ENCODE measurements at regions of chr9 and their contacts with region 1.

Region 1: GRCh38 chr9:72038890-72039410 is 21.5 kb downstream of the C9orf57 start:
- DNase-seq: peak; percentile 77

Region 2: DNA sequence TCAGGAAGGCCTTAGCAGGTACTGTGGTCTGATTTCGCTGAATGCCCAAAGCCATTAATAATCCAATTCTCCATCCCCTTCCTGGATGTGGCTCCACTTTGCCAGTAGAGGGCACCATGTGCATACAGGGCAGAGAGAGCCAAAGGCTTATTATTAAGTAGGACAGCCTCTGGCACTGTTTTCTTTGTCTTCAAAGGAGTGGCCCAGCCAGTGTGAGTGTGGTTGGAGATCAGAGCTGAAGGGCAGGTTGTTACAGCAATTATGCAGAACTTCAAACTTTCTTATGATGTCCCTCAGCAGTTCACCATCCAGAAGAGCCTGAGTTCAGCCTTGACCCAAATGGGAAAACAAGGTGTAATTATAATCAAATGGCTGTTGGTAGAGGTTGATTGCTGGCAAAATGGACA is 232.0 kb before region 1 on chr9:
- in situ Hi-C with region 1: loop called (anchors 25 kb)
- DNase-seq: peak; percentile 65

Region 3: GRCh38 chr9:72082536-72082935 is 43.6 kb after region 1 on chr9:
- in situ Hi-C with region 1: no loop called
- DNase-seq: no peak

Region 4: DNA sequence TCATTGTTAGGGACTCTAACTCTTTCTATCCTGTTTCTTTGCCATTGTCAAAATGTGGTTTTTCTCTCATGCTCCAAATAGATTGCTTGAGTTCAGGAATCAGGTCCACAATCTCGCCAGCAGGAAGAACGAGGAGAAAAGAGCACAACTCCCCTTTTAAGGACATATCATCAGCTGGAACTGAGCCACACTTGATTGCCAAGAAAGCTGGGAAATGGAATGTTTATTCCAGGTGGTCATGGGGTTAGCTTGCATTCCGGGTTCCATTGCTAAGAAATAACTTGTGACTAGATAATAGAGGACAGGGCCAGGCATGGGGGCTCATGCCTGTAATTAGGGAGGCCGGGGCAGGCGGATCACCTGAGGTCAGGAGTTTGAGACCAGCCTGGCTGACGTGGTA is 53.9 kb after region 1 on chr9:
- in situ Hi-C with region 1: no loop called
- DNase-seq: no peak

Region 5: DNA sequence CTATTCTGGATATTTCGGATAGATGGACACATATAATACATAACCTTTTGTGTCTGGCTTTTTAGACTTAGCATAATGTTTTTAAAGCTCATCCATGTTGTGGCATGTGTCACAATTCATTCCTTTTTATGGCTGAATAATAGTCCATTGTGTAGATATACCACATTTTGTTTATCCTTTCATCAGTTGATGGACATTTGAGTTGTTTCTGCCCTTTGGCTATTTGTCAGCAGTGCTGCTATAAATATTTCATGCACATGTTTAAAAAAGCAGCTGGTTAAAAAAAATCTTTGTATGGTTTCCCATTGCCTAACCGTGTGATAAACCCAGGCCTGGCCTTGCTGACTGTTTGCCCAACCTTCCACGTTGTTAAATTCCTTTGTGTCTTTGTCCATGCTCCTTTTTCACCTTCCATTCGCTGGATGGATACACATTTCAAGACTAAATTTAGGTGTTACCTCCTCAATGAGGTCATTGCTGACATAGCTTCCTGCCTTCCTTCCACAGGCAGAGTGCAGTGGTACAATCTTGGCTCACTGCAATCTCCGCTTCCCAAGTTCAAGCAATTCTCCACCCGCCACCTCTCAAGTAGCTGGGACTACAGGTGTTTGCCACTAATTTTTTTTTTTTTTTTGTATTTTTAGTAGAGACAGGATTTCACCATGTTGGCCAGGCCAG is 121.6 kb after region 1 on chr9:
- in situ Hi-C with region 1: no loop called
- DNase-seq: no peak

Region 6: DNA sequence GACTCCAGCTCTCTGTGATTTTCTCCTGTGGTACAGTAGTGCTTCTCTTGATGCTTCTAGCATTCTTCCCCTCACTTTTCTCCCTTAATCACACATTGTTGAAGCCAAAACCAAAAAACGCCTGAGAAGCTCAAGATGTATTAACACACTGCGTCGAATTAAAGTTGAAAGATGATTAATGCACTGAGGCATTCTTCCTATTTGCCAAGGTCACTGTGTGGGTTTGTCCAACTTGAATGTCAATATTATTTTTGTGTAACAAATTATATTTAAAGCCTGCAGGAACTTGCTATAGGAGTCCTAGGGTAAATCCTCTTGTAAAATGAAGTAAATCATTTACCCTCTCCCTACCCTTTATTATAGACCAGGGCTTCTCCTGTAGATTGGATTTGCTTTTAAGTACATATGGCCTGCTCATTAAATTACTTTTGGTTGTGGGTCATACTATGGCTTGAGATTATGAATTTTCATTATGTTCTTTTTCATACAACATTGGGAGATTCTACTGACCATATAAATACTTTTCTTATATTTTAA is 178.4 kb after region 1 on chr9:
- in situ Hi-C with region 1: no loop called
- DNase-seq: no peak